AG04449 (cell line): ENCODE measurements at regions of chr5 and their contacts with region 1.

Region 1: DNA sequence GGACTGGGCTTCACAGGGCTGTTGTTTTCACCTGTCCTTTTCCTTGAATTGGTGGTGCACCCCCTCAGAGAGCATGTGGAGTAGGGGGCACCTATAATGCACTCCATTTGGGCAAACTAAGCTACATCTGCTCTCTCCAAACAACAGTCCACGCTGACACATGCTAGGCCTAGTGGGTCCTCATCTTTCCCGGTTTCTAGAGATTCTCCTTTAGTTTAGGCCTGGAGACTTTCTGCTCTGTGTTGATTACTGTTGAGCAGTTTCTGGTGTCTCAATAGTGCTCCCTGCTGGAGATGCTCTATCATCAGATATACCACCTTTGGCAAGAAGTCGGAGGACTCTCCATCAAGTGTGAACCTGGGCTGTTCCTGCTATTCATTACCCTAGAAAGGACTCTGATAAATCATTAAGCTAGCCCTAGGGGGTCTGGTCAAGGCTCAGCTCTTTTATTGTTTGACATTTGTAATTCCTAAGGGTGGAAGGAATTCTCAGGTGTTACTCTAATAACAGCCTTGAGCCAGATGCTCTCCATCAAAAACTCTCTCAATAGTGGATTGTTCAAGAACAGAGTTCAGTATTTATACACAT is 64.0 kb upstream of the FYB1 start:
- DNase-seq: peak; percentile 9
- H3K4me3 ChIP-seq: no peak overlapping the region
- CTCF ChIP-seq: peak; percentile 57

Region 2: DNA sequence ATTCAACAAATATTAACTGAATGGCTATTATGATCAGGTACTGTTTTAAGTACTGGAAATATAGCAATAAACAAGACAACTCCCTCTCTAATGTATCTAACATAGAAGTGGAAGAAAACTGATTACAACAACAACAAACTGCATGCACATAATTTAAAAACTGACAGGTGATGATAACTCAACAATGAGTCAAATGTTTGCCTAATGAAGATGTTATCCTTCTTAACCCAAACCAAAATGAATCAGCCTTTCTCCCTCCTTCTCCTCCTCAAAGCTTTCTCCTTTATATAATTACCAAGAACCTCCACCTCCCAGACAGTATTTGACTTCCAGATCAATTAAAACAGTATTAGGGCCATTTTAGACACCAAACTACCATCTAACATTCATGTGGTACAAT is 258.4 kb before region 1 on chr5:
- CTCF ChIA-PET with region 1: no interaction called
- POLR2A ChIA-PET with region 1: no interaction called
- DNase-seq: no peak
- H3K4me3 ChIP-seq: no peak overlapping the region
- CTCF ChIP-seq: no peak

Region 3: GRCh38 chr5:39100851-39101396 is 182.4 kb before region 1 on chr5:
- CTCF ChIA-PET with region 1: interaction called, 12 read pairs
- POLR2A ChIA-PET with region 1: no interaction called
- DNase-seq: peak; percentile 95
- H3K4me3 ChIP-seq: no peak overlapping the region
- CTCF ChIP-seq: no peak

Region 4: GRCh38 chr5:39148983-39149534 is 134.3 kb before region 1 on chr5:
- CTCF ChIA-PET with region 1: interaction called, 78 read pairs
- POLR2A ChIA-PET with region 1: no interaction called
- DNase-seq: no peak
- H3K4me3 ChIP-seq: no peak overlapping the region
- CTCF ChIP-seq: no peak

Region 5: DNA sequence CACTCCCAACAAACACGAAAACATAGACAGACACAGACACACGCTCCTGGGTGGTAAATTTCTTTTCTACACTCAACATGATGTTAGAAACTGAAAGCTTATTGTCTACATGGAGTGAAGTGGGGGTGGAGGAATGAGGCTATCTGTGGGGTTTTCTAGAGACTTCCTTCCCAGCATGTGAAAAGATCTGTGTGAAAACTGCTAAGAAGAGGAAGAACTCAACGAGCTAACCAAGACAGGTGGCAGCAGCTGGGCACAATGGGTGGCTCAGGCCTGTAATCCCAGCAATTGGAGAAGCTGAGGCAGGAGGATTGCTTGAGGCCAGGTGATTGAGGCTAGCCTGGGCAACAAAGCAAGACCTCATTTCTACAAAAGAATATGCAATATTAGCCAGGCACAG is 71.6 kb before region 1 on chr5:
- CTCF ChIA-PET with region 1: interaction called, 108 read pairs
- POLR2A ChIA-PET with region 1: no interaction called
- DNase-seq: no peak
- H3K4me3 ChIP-seq: no peak overlapping the region
- CTCF ChIP-seq: no peak

Region 6: GRCh38 chr5:39294736-39295135 is 11.4 kb after region 1 on chr5:
- CTCF ChIA-PET with region 1: interaction called, 25 read pairs
- POLR2A ChIA-PET with region 1: no interaction called
- DNase-seq: no peak
- H3K4me3 ChIP-seq: no peak overlapping the region
- CTCF ChIP-seq: no peak

Region 7: DNA sequence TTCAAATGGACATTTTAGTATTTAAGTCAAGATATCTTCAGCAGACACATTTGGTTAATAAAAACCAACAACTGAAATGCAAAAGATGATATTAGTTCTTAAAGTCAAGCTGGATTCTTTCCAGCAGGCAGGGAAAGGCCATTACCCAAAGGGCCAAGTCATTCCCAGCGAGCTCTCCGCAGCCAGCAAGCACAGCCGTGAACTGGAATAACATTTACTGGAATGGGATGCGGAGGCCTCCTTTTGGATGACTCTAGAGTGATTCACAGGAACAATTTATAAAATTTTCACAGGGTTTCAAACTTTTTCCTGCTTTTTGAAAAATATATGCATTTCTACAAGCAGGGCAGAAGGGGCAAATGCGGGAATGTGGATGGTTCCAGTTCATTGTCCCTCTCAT is 218.1 kb after region 1 on chr5:
- CTCF ChIA-PET with region 1: no interaction called
- POLR2A ChIA-PET with region 1: no interaction called
- DNase-seq: peak; percentile 73
- H3K4me3 ChIP-seq: no peak overlapping the region
- CTCF ChIP-seq: no peak